Naive thymus-derived CD8-positive, alpha-beta T cell (primary cell): ENCODE measurements at regions of chr22 and their contacts with region 1.

Region 1: GRCh38 chr22:24011735-24012068 is 598 bp downstream of the CABIN1 start:
- DNase-seq: peak in 1 of 10 donors; percentile 12
- ATAC-seq: no peak
- H3K4me3 Mint-ChIP-seq: peak overlapping the region; percentile 93 to 99 (median 96)
- H3K27ac Mint-ChIP-seq: peak overlapping the region; percentile 70 to 100 (median 97)
- H3K4me1 Mint-ChIP-seq: peaks cover 23 to 44% (median 38%) of the 10 kb centered on the region in 4 donors
- H3K27me3 Mint-ChIP-seq: peaks cover 0 to 3% (median 0%) of the 10 kb centered on the region in 5 donors

Region 2: GRCh38 chr22:23893943-23894709 is 117.6 kb before region 1 on chr22 and contains the start of gene MIF:
- POLR2A ChIA-PET with region 1: interaction called, 12 read pairs
- DNase-seq: peak; percentile 87 to 99 (median 95)
- ATAC-seq: peak; percentile 84 to 85
- H3K4me3 Mint-ChIP-seq: peak within 1 kb of the TSS; percentile 84 to 96 (median 93)
- H3K27ac Mint-ChIP-seq: peak within 1 kb of the TSS; percentile 91 to 99 (median 97)
- H3K4me1 Mint-ChIP-seq: peaks cover 18 to 37% (median 28%) of the 10 kb centered on the region in 4 donors
- H3K27me3 Mint-ChIP-seq: no peaks in the 10 kb centered on the region
- polyA plus RNA-seq, gene MIF: 1,088 to 1,264 (median 1,247) TPM

Region 3: GRCh38 chr22:24030186-24030702 is 18.5 kb after region 1 on chr22:
- POLR2A ChIA-PET with region 1: interaction called, 99 read pairs
- DNase-seq: no peak
- ATAC-seq: no peak
- H3K4me3 Mint-ChIP-seq: no peak overlapping the region
- H3K27ac Mint-ChIP-seq: peak overlapping the region in 4 of 10 donors; percentile 1 to 79 (median 26)
- H3K4me1 Mint-ChIP-seq: peaks cover 21 to 65% (median 56%) of the 10 kb centered on the region in 4 donors
- H3K27me3 Mint-ChIP-seq: no peaks in the 10 kb centered on the region

Region 4: DNA sequence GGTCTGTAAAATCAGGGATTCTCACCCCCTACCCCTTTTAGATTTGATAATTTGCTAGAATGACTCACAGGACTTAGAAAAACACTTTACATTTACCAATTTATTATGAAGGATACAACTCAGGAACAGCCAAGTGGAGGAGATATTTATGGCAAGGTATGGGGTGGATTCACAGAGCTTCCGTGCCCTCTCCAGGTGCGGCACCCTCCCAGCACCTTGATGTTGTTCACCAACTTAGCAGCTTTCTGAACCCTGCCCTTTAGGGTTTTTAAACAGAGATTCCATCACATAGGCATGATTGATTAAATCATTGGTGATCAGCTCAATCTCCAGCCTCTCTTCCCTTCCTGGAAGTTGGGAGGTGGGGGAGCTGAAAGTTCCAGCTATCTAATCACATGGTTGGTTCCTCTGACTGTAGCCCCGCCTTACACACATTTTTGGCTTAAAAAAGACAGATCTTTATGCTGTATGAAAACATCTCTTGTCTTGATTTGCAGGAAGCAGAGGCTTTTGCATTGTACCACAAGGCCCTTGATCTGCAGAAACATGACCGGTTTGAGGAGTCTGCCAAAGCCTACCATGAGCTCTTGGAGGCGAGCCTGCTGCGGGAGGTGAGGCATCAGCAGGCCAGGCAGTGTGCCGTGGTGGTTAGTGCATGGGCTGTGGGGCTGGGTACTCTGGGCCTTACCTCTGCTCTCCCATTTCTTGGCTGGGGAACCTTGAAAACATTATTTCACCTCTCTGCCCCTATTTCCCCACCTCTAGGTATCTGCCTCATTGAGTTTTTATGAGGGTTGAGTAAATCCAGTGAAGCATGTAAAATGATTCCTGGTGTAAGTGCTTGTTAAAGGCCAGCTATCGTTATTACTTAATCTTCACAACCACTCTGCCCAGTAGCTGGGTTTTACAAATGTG is 26.4 kb after region 1 on chr22:
- POLR2A ChIA-PET with region 1: interaction called, 99 read pairs
- DNase-seq: peak; percentile 14 to 83 (median 60)
- ATAC-seq: peak; percentile 97
- H3K4me3 Mint-ChIP-seq: peak overlapping the region; percentile 46 to 86 (median 80)
- H3K27ac Mint-ChIP-seq: peak overlapping the region; percentile 92 to 97 (median 94)
- H3K4me1 Mint-ChIP-seq: peaks cover 57 to 82% (median 72%) of the 10 kb centered on the region in 4 donors
- H3K27me3 Mint-ChIP-seq: no peaks in the 10 kb centered on the region

Region 5: GRCh38 chr22:24060375-24060788 is 48.7 kb after region 1 on chr22:
- POLR2A ChIA-PET with region 1: interaction called, 12 read pairs
- DNase-seq: peak in 4 of 10 donors; percentile 14 to 39 (median 31)
- ATAC-seq: peak; percentile 72 to 91
- H3K4me3 Mint-ChIP-seq: peak overlapping the region in 8 of 10 donors; percentile 18 to 71 (median 40)
- H3K27ac Mint-ChIP-seq: peak overlapping the region in 9 of 10 donors; percentile 31 to 96 (median 92)
- H3K4me1 Mint-ChIP-seq: peaks cover 0 to 27% (median 12%) of the 10 kb centered on the region in 4 donors
- H3K27me3 Mint-ChIP-seq: no peaks in the 10 kb centered on the region

Region 6: DNA sequence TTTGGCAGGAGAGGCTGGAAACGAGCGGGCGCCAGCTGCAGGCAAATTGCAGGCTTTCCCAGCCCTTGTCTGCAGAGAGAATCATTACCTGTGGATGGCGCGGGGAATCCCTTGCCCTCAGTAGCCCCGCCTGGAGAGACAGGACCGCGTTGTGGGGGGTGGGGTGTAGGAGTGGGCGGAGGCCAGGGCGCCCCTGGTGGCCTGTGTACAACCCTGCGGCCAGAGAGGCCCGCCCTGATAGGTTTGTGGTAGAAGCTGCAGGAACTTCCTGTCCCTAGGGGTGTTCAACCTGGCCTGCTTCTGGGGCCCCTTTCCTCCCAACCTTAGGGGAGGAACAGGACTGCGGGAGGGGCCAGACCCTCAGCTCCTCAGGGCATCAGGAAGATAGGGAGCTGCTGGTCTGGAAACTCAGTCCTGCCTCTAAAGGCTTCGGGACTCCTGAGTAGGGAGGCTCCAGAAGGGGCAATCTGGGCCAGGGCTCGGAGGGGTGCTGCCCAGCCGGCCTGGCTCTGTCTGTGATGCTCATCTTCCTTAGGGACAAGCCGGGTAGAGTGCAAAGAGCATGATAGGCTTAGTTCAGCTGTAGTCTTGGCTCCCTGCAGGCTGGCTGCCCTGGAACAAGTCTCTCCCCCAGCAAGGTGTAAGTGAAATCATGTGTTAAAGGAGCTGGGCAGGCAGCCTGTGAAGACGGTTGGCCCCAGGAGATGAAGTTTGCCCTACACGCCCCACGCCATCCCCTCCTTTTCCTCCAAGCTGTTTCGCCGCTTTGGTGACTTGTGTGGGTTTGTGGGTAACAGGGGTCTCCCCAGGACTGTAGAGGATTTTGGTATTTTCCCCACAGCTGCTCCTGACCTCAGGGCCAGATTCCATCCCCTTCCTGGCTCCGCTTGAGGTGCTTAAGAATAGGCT is 145.5 kb after region 1 on chr22:
- POLR2A ChIA-PET with region 1: interaction called, 12 read pairs
- DNase-seq: peak; percentile 72 to 94 (median 86)
- ATAC-seq: peak; percentile 63 to 72
- H3K4me3 Mint-ChIP-seq: peak overlapping the region; percentile 91 to 97 (median 94)
- H3K27ac Mint-ChIP-seq: peak overlapping the region; percentile 87 to 98 (median 94)
- H3K4me1 Mint-ChIP-seq: peaks cover 47 to 95% (median 82%) of the 10 kb centered on the region in 4 donors
- H3K27me3 Mint-ChIP-seq: no peaks in the 10 kb centered on the region